ENCODE measurements at regions of chr17 and their contacts with region 1.

Region 1: GRCh38 chr17:62109378-62109902 is 44.4 kb upstream of the MED13 start:
- DNase-seq: peak; percentile 95
- ATAC-seq: peak; percentile 99
- H3K4me3 ChIP-seq: no peak overlapping the region
- H3K27ac ChIP-seq: no peak overlapping the region
- H3K4me1 ChIP-seq: peaks cover 0 to 16% of the 10 kb centered on the region in 2 experiments; a peak in 2 of 4 replicates
- H3K27me3 ChIP-seq: no peaks in the 10 kb centered on the region
- CTCF ChIP-seq: peak; percentile 99 to 100 (median 99)
- POLR2A ChIP-seq: no peak
- RAD21 ChIP-seq: peak; percentile 100

Region 2: DNA sequence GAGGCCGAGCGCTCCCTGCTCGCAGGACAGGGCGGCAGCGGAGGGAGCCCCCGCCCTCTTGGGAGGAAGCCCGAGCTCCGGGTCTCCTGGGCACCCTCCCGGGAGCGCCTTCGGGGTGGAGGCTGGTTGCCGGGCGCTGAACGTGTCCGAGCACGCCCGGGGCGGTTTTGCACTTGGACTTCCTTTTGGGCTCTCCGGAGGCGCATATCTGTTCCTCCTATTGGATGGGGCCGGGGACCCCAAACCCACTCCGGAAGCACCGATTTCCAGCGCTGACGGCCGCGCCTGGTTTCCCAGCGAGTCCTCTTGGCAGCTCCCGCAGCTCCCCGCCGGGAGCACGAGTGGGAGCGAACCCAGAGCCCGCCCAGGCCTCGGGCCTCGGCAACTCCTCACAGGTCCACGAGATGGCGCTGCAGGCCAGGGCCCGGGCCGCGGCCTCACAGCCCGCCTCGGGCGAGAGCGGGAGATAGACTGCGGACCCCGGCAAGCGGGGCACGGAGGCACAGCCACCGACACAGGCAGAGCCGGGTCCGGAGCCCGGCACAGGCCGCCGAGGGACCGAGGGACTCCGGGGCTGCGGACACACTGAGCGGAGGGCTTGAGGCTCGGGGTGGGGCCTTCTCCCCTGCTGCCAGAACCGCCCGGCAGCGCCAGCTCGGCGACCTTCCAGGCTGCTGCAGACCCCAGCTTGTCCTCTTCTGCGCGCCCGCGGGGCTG is 697.1 kb before region 1 on chr17:
- CTCF ChIA-PET with region 1: interaction called, 28 read pairs
- POLR2A ChIA-PET with region 1: no interaction called
- RAD21 ChIA-PET with region 1: interaction called in 1 of 2 experiments, 3 read pairs
- intact Hi-C with region 1: loop called (anchors 1 kb)
- DNase-seq: peak; percentile 49
- ATAC-seq: peak; percentile 62
- H3K4me3 ChIP-seq: peak overlapping the region; percentile 54 to 64
- H3K27ac ChIP-seq: peak overlapping the region; percentile 97
- H3K4me1 ChIP-seq: peaks cover 58 to 70% of the 10 kb centered on the region in 2 experiments
- H3K27me3 ChIP-seq: no peaks in the 10 kb centered on the region
- CTCF ChIP-seq: peak; percentile 94 to 100 (median 99)
- POLR2A ChIP-seq: no peak
- RAD21 ChIP-seq: peak; percentile 100

Region 3: DNA sequence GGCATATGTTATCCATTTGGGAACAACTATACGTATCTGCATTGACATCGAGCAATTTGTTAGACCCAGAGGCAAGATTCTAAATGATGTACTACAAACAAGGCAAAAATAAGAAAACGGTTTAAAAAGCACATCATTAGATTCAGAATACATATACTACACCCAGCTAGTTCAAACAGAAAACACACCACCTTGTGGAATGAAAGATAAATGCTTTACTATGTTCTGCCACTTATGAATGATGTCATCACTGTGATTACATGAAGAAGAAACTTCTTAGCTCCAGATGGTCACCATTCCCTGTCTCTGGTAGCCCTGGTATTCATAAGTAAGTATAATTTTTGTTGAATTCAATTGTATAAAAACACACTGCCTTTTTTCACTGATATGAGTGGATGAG is 526.2 kb before region 1 on chr17:
- CTCF ChIA-PET with region 1: interaction called, 29 read pairs
- POLR2A ChIA-PET with region 1: interaction called, 3 read pairs
- RAD21 ChIA-PET with region 1: interaction called in 1 of 2 experiments, 4 read pairs
- intact Hi-C with region 1: no loop called
- DNase-seq: peak; percentile 65
- ATAC-seq: peak; percentile 97
- H3K4me3 ChIP-seq: no peak overlapping the region
- H3K27ac ChIP-seq: peak overlapping the region; percentile 38; the same call in 1 of the 2 replicates
- H3K4me1 ChIP-seq: peaks cover 9 to 24% of the 10 kb centered on the region in 2 experiments
- H3K27me3 ChIP-seq: no peaks in the 10 kb centered on the region
- CTCF ChIP-seq: peak; percentile 44 to 74 (median 74); a peak in 5 of 6 replicates
- POLR2A ChIP-seq: no peak
- RAD21 ChIP-seq: peak; percentile 72

Region 4: GRCh38 chr17:61837175-61838051 is 272.0 kb before region 1 on chr17:
- CTCF ChIA-PET with region 1: interaction called, 12 read pairs
- POLR2A ChIA-PET with region 1: no interaction called
- RAD21 ChIA-PET with region 1: no interaction called
- intact Hi-C with region 1: loop called (anchors 2 kb)
- DNase-seq: peak; percentile 74
- ATAC-seq: peak; percentile 79
- H3K4me3 ChIP-seq: no peak overlapping the region
- H3K27ac ChIP-seq: no peak overlapping the region
- H3K4me1 ChIP-seq: peaks cover 17 to 21% of the 10 kb centered on the region in 2 experiments
- H3K27me3 ChIP-seq: no peaks in the 10 kb centered on the region
- CTCF ChIP-seq: peak; percentile 74 to 92 (median 89)
- POLR2A ChIP-seq: no peak
- RAD21 ChIP-seq: peak; percentile 93

Region 5: DNA sequence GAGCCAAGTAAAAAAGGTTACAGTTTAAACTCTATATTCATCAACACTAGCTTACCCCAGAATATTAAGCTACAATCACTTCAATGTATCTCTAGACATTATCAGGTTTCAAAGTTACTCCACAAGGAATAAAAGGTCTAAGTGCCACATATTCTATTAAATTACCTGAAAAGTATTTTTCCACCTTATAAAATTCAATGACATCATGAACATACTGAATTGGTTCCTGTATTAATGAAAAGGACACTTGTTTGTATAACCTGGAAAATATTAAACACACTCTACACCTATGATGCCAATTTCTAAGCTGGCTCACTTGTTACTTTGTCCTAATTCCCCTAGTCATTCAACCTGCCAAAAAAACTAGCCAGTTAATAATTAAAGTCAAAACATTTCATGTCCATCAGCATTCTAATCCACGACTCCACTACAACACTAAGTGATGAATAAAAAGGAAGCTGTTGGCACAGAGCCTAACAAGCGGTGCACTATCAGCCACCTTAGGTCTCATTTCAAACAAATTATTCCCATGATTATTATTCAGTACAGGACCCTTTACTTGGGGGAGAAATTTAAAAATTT is 56.6 kb before region 1 on chr17:
- CTCF ChIA-PET with region 1: interaction called, 17 read pairs
- POLR2A ChIA-PET with region 1: no interaction called
- RAD21 ChIA-PET with region 1: no interaction called
- intact Hi-C with region 1: no loop called
- DNase-seq: no peak
- ATAC-seq: no peak
- H3K4me3 ChIP-seq: no peak overlapping the region
- H3K27ac ChIP-seq: no peak overlapping the region
- H3K4me1 ChIP-seq: no peaks in the 10 kb centered on the region; a peak in 1 of 4 replicates
- H3K27me3 ChIP-seq: no peaks in the 10 kb centered on the region
- CTCF ChIP-seq: no peak
- POLR2A ChIP-seq: no peak
- RAD21 ChIP-seq: no peak

Region 6: DNA sequence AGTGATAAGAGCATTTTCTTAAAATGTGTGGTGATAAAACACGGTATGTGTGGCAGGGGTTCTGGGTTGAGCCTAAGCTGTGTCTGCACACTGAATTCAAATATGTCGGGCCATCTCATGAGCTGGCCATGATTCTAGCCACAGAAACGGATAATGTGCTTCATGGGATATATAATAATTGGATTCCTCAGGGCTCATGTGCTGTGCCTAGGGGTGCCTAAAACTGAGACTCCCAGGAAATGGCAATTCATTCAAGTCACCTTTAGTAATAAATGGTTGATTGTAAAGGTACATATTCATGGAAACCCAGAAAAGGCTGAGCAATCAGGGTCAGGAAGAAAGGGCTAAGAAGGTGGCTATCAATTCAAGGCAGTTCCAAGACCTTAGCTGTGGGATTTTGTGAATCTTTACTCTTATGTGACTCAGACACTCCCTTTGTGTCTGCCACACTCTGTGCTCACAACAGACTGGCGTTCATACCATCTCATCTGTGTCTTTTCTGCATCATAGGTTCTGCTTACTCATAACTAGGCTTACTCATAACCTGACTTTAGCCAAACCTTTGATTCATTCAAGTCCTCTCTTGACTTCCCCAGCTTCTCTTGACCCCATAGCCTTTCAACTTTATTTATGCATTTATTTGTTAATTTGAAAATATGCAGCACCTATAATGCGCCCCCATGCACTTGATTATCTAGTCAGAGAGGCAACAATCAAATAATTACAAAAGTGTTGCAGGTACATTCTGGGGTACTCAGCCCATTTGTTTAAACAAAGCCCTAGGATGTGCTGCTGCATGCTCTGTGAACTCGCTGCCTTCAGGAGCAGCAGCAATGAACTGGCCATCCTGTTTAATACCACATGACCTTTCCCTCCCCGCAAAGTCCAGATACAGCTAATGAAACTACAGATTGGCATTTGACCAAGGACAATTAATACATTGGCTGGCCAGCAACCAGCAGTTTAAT is 16.0 kb before region 1 on chr17:
- CTCF ChIA-PET with region 1: interaction called, 24 read pairs
- POLR2A ChIA-PET with region 1: no interaction called
- RAD21 ChIA-PET with region 1: interaction called, 3 read pairs
- intact Hi-C with region 1: no loop called
- DNase-seq: peak; percentile 90
- ATAC-seq: peak; percentile 96
- H3K4me3 ChIP-seq: no peak overlapping the region
- H3K27ac ChIP-seq: peak overlapping the region; percentile 2; the same call in 1 of the 2 replicates
- H3K4me1 ChIP-seq: peaks cover 7 to 20% of the 10 kb centered on the region in 2 experiments
- H3K27me3 ChIP-seq: no peaks in the 10 kb centered on the region
- CTCF ChIP-seq: no peak
- POLR2A ChIP-seq: no peak
- RAD21 ChIP-seq: no peak

Region 7: GRCh38 chr17:62179534-62180151 is 70.2 kb after region 1 on chr17:
- CTCF ChIA-PET with region 1: interaction called, 13 read pairs
- POLR2A ChIA-PET with region 1: no interaction called
- RAD21 ChIA-PET with region 1: interaction called, 4 to 11 read pairs
- intact Hi-C with region 1: no loop called
- DNase-seq: peak; percentile 88
- ATAC-seq: peak; percentile 95
- H3K4me3 ChIP-seq: peak overlapping the region in 1 of 2 experiments; percentile 7; a peak in 1 of 4 replicates
- H3K27ac ChIP-seq: peak overlapping the region; percentile 9
- H3K4me1 ChIP-seq: peaks cover 17 to 21% of the 10 kb centered on the region in 2 experiments
- H3K27me3 ChIP-seq: no peaks in the 10 kb centered on the region
- CTCF ChIP-seq: peak; percentile 42 to 72 (median 42)
- POLR2A ChIP-seq: no peak
- RAD21 ChIP-seq: peak; percentile 88

Region 8: GRCh38 chr17:62381561-62381960 is 272.1 kb after region 1 on chr17:
- CTCF ChIA-PET with region 1: no interaction called
- POLR2A ChIA-PET with region 1: no interaction called
- RAD21 ChIA-PET with region 1: no interaction called
- intact Hi-C with region 1: no loop called
- DNase-seq: no peak
- ATAC-seq: no peak
- H3K4me3 ChIP-seq: no peak overlapping the region
- H3K27ac ChIP-seq: no peak overlapping the region
- H3K4me1 ChIP-seq: no peaks in the 10 kb centered on the region
- H3K27me3 ChIP-seq: no peaks in the 10 kb centered on the region
- CTCF ChIP-seq: no peak
- POLR2A ChIP-seq: no peak
- RAD21 ChIP-seq: no peak

Measured in HCT116 (cell line).